ENCODE measurements at regions of chr3 and their contacts with region 1.

Region 1: DNA sequence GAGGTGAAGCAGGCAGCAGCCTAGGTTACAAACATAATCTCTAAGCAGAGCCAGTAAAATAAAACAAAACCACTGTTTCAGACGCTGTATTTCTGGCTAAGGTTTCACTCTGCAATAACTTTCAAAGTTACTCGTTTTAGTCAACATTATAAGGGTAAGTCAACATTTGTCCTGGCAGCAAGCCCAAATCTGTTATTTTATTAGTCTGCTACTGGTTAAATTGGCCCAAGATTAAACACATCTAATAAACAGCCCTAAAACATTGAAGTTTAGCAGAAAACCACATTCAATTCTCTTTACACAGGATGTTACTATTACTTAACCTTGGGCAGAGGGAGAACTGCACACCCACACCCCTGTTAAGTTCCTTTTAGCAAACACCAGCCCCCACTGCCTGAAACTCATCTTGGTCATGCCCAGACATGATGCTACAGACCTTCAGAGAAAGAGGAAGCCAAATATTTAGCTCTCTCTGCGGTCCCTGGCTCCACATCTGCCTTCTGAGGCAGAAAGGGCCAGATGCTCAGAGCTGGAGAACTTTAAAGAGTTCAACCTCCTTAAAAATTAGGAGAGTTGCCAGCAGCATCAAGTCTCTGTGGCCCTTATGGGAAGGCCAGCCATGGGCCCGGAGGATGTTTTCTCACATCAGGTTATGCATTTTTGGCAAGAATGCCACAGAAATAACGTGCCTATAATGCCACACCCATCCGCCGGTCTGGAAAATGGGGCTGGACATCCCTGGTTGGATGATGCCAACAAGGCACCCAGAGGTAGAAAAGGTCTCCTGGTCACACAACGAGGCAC is 17.9 kb downstream of the ARHGEF3 start:
- DNase-seq: peak; percentile 84
- H3K4me3 Mint-ChIP-seq: peak overlapping the region; percentile 69
- H3K27ac Mint-ChIP-seq: peak overlapping the region; percentile 95
- H3K4me1 Mint-ChIP-seq: peaks cover 97% of the 10 kb centered on the region
- H3K27me3 Mint-ChIP-seq: no peaks in the 10 kb centered on the region

Region 2: DNA sequence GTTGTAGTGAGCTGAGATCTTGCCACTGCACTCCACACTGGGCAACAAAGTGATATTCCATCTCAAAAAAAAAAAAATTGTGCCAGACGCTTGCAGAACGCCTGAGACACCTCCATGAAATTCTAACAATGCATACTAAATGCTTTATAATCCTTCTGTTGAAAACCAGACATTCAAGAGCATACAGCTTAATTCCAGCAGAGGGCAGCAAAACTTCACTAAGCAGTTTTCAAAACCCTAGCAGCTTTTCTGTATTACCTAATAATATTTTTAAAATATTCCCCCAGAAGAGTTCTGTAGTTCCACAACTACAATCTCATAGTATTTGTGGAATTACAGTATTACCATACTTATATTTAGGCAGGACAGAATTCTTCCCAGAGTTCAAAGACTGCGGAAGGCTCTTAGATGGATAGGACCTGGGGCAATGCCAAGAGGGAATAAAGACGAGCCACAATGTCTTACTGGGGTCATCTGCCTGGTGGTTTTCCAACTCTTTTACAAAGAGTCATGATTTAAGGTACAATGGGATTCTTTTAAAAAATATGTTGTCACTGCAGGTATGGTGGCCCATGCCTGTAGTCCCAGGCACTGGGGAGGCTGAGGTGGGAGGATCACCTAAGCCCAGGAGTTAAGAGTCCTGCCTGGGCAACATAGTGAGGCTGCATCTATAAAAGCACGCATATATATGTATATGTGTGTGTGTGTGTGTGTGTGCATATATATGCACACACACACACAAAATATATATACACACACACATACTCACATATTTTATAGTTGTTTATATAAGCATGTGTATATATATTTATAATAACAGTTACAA is 81.1 kb before region 1 on chr3:
- CTCF ChIA-PET with region 1: interaction called, 13 read pairs
- POLR2A ChIA-PET with region 1: no interaction called
- intact Hi-C with region 1: no loop called
- DNase-seq: peak; percentile 36
- H3K4me3 Mint-ChIP-seq: no peak overlapping the region
- H3K27ac Mint-ChIP-seq: no peak overlapping the region
- H3K4me1 Mint-ChIP-seq: peaks cover 11% of the 10 kb centered on the region
- H3K27me3 Mint-ChIP-seq: no peaks in the 10 kb centered on the region

Region 3: DNA sequence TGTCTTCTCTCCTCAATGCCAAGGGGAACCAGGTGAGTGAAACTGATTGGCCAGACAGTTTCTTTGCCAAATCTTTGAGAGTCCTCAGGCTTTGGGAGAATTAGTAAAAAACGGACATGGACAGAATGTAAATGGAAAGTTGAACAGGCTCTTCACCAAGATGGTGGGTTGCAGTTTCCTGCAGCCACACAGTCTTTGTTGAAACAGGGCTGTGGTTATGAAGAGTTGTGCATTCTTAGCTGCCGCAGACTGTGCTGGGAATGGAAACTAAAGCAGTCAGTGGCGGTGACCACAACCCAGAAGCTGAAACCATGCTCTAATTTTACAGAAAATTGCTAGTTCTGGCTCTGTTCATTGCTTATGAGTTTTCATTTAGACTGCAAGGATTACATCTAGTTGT is 58.7 kb before region 1 on chr3:
- CTCF ChIA-PET with region 1: no interaction called
- POLR2A ChIA-PET with region 1: interaction called, 4 read pairs
- intact Hi-C with region 1: loop called (anchors 2 kb)
- DNase-seq: peak; percentile 86
- H3K4me3 Mint-ChIP-seq: peak overlapping the region; percentile 52
- H3K27ac Mint-ChIP-seq: peak overlapping the region; percentile 83
- H3K4me1 Mint-ChIP-seq: peaks cover 32% of the 10 kb centered on the region
- H3K27me3 Mint-ChIP-seq: no peaks in the 10 kb centered on the region

Region 4: DNA sequence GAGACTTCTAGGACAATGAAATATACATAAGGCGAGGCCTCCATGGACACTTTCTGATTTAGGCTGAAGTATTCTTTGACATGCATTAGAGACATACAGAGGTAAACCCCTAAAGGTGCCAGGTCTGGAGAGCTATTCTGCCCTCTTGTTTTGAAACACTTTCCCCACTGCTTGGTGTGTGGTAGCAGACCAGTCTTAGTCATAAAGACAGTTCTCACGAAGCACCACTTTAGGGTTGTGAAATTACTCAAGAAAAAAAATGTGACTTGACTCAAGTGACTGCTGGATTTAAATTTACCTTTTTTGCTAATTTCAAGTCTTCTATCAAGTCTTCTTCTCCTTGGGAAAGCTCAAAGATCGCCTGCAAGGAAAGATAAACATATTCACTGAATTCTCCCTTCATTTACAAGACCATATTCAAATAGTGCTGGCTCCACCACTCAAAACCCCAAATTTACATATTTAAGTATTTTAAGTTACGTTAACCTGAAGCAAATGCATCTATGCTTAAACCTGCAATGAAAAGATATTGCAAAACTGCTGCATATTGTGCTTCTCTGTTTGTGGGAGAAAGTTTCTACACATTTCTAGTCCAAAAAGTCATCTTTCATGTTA is 30.5 kb before region 1 on chr3:
- CTCF ChIA-PET with region 1: interaction called, 4 read pairs
- POLR2A ChIA-PET with region 1: interaction called, 7 read pairs
- intact Hi-C with region 1: loop called (anchors 1 kb)
- DNase-seq: peak; percentile 73
- H3K4me3 Mint-ChIP-seq: peak overlapping the region; percentile 18
- H3K27ac Mint-ChIP-seq: peak overlapping the region; percentile 23
- H3K4me1 Mint-ChIP-seq: peaks cover 57% of the 10 kb centered on the region
- H3K27me3 Mint-ChIP-seq: no peaks in the 10 kb centered on the region

Region 5: DNA sequence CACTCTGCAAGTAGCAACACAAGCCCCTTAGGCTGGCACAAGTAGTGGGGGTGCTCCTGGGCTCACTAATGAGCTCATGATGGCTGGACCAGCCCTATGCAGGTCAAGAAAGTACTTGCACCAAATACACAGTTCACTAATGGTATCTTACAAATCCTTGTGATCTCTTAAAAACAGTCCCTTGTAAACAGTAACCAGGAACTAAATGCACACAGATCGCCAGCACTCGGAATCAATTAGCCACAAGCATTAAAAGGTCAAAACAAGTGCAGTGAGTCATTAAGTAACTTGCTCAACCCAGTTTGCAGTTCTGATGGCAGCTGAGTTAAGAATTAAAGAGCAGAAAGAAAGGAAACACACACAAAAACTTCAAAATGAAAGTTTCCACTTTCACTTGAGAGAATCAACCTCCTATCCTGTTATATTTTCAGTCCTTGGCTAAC is 25.3 kb before region 1 on chr3:
- CTCF ChIA-PET with region 1: interaction called, 4 read pairs
- POLR2A ChIA-PET with region 1: interaction called, 7 read pairs
- intact Hi-C with region 1: loop called (anchors 1 kb)
- DNase-seq: peak; percentile 62
- H3K4me3 Mint-ChIP-seq: peak overlapping the region; percentile 66
- H3K27ac Mint-ChIP-seq: peak overlapping the region; percentile 86
- H3K4me1 Mint-ChIP-seq: peaks cover 73% of the 10 kb centered on the region
- H3K27me3 Mint-ChIP-seq: no peaks in the 10 kb centered on the region

Measured in activated CD4-positive, alpha-beta memory T cell treated with anti-CD3 and anti-CD28 coated beads for 36 hours (primary cell).